B cell (primary cell): ENCODE measurements at regions of chr17 and their contacts with region 1.

Region 1: GRCh38 chr17:7740481-7741001 is 23.0 kb downstream of the DNAH2 start:
- DNase-seq: no peak
- ATAC-seq: no peak
- H3K4me3 ChIP-seq: no peak overlapping the region
- H3K4me3 Mint-ChIP-seq: no peak overlapping the region
- H3K27ac ChIP-seq: no peak overlapping the region
- H3K27ac Mint-ChIP-seq: peak overlapping the region; percentile 46
- H3K4me1 ChIP-seq: no peaks in the 10 kb centered on the region
- H3K4me1 Mint-ChIP-seq: no peaks in the 10 kb centered on the region
- H3K27me3 ChIP-seq: peaks cover 0 to 5% (median 0%) of the 10 kb centered on the region in 4 experiments
- H3K27me3 Mint-ChIP-seq: peaks cover 38% of the 10 kb centered on the region
- CTCF ChIP-seq: no peak

Region 2: GRCh38 chr17:7627250-7628121 is 113.1 kb before region 1 on chr17 and contains the start of gene SAT2:
- CTCF ChIA-PET with region 1: no interaction called
- POLR2A ChIA-PET with region 1: no interaction called
- intact Hi-C with region 1: no loop called
- DNase-seq: peak; percentile 92
- ATAC-seq: peak; percentile 99
- H3K4me3 ChIP-seq: peak within 1 kb of the TSS; percentile 55 to 97 (median 89)
- H3K4me3 Mint-ChIP-seq: peak within 1 kb of the TSS; percentile 93
- H3K27ac ChIP-seq: peak within 1 kb of the TSS; percentile 79 to 88
- H3K27ac Mint-ChIP-seq: peak within 1 kb of the TSS; percentile 92
- H3K4me1 ChIP-seq: peaks cover 6 to 14% of the 10 kb centered on the region in 2 donors
- H3K4me1 Mint-ChIP-seq: peaks cover 17% of the 10 kb centered on the region
- H3K27me3 ChIP-seq: no peaks in the 10 kb centered on the region
- H3K27me3 Mint-ChIP-seq: no peaks in the 10 kb centered on the region
- CTCF ChIP-seq: no peak
- total RNA-seq, gene SAT2: 68.8 and 83.6 TPM in 2 replicates

Region 3: DNA sequence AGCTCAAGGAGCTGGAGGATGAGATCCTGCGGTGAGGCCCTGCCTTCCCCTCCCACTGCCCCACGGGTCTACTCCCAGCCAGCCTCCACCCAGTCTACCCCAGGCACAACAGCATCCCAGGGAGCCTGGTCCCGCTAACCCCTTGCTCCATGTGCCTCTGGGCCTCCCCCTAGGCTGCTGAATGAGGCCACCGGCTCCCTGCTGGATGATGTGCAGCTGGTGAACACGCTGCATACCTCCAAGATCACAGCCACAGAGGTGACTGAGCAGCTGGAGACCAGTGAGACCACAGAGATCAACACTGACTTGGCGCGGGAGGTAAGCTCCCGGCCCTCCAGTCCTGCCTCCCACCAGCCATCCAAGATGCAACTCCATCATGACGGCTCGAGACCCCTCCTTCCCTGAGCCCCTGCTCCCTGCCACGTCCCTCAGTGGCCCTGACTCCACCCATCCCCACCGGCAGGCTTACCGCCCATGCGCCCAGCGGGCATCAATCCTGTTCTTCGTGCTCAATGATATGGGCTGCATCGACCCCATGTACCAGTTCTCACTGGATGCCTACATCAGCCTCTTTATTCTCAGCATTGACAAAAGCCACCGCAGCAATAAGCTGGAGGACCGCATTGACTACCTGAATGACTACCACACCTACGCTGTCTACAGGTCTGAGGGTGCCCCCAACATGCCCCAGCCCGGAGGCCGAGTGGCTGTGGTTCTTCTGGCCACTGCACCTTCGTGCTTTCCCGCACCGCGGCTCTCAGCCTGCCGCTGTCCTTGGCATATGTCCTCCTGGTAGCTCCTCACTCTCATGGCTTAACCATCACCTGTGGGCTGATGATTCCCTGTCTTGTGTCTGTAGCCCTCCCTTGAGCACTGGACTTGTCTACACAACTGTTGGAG is 78.5 kb after region 1 on chr17:
- CTCF ChIA-PET with region 1: interaction called, 8 read pairs
- POLR2A ChIA-PET with region 1: no interaction called
- intact Hi-C with region 1: loop called (anchors 1 kb)
- DNase-seq: no peak
- ATAC-seq: no peak
- H3K4me3 ChIP-seq: no peak overlapping the region
- H3K4me3 Mint-ChIP-seq: no peak overlapping the region
- H3K27ac ChIP-seq: no peak overlapping the region
- H3K27ac Mint-ChIP-seq: no peak overlapping the region
- H3K4me1 ChIP-seq: no peaks in the 10 kb centered on the region
- H3K4me1 Mint-ChIP-seq: no peaks in the 10 kb centered on the region
- H3K27me3 ChIP-seq: no peaks in the 10 kb centered on the region
- H3K27me3 Mint-ChIP-seq: peaks cover 8% of the 10 kb centered on the region
- CTCF ChIP-seq: no peak

Region 4: GRCh38 chr17:7851438-7852256 is 111.1 kb after region 1 on chr17:
- CTCF ChIA-PET with region 1: interaction called, 6 read pairs
- POLR2A ChIA-PET with region 1: no interaction called
- intact Hi-C with region 1: loop called (anchors 1 kb)
- DNase-seq: peak; percentile 98
- ATAC-seq: peak; percentile 95
- H3K4me3 ChIP-seq: peak overlapping the region in 4 of 5 experiments; percentile 28 to 50 (median 38)
- H3K4me3 Mint-ChIP-seq: peak overlapping the region; percentile 71
- H3K27ac ChIP-seq: peak overlapping the region; percentile 55 to 56
- H3K27ac Mint-ChIP-seq: peak overlapping the region; percentile 82
- H3K4me1 ChIP-seq: peaks cover 20 to 33% of the 10 kb centered on the region in 2 donors
- H3K4me1 Mint-ChIP-seq: peaks cover 24% of the 10 kb centered on the region
- H3K27me3 ChIP-seq: no peaks in the 10 kb centered on the region
- H3K27me3 Mint-ChIP-seq: no peaks in the 10 kb centered on the region
- CTCF ChIP-seq: peak; percentile 93

Region 5: DNA sequence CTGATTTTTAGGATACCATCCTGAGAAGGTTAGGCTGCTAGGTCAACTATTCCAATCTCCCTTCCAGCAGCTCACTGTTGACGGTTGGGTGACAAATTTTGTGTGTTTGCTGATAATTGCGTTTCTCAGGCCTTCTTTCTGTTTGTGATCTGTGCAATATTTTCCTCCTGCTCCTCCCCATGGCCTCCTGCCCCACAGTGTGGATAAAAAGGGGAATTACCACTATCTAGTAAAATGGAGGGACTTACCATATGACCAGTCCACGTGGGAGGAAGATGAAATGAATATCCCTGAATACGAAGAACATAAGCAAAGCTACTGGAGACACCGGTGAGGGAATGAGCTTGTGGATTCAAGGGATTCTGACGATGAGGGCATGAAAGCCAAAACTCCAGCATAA is 157.2 kb after region 1 on chr17:
- CTCF ChIA-PET with region 1: interaction called, 10 read pairs
- POLR2A ChIA-PET with region 1: no interaction called
- intact Hi-C with region 1: no loop called
- DNase-seq: peak; percentile 33
- ATAC-seq: peak; percentile 39
- H3K4me3 ChIP-seq: no peak overlapping the region
- H3K4me3 Mint-ChIP-seq: no peak overlapping the region
- H3K27ac ChIP-seq: no peak overlapping the region
- H3K27ac Mint-ChIP-seq: no peak overlapping the region
- H3K4me1 ChIP-seq: no peaks in the 10 kb centered on the region
- H3K4me1 Mint-ChIP-seq: no peaks in the 10 kb centered on the region
- H3K27me3 ChIP-seq: no peaks in the 10 kb centered on the region
- H3K27me3 Mint-ChIP-seq: no peaks in the 10 kb centered on the region
- CTCF ChIP-seq: no peak

Region 6: GRCh38 chr17:8041249-8041928 is 300.8 kb after region 1 on chr17:
- CTCF ChIA-PET with region 1: interaction called, 13 read pairs
- POLR2A ChIA-PET with region 1: no interaction called
- intact Hi-C with region 1: loop called (anchors 5 kb)
- DNase-seq: peak; percentile 64
- ATAC-seq: no peak
- H3K4me3 ChIP-seq: no peak overlapping the region
- H3K4me3 Mint-ChIP-seq: no peak overlapping the region
- H3K27ac ChIP-seq: no peak overlapping the region
- H3K27ac Mint-ChIP-seq: no peak overlapping the region
- H3K4me1 ChIP-seq: peaks cover 5 to 8% of the 10 kb centered on the region in 2 donors
- H3K4me1 Mint-ChIP-seq: peaks cover 3% of the 10 kb centered on the region
- H3K27me3 ChIP-seq: peaks cover 0 to 14% (median 7%) of the 10 kb centered on the region in 4 experiments
- H3K27me3 Mint-ChIP-seq: peaks cover 42% of the 10 kb centered on the region
- CTCF ChIP-seq: peak; percentile 56